ENCODE measurements at regions of chr16 and their contacts with region 1.

Region 1: GRCh38 chr16:85717393-85718121 is 28.8 kb upstream of the GINS2 start:
- DNase-seq: peak; percentile 38
- ATAC-seq: peak; percentile 57
- H3K4me3 Mint-ChIP-seq: no peak overlapping the region
- H3K27ac Mint-ChIP-seq: no peak overlapping the region
- H3K4me1 Mint-ChIP-seq: peaks cover 18% of the 10 kb centered on the region
- H3K27me3 Mint-ChIP-seq: no peaks in the 10 kb centered on the region
- CTCF ChIP-seq: no peak

Region 2: DNA sequence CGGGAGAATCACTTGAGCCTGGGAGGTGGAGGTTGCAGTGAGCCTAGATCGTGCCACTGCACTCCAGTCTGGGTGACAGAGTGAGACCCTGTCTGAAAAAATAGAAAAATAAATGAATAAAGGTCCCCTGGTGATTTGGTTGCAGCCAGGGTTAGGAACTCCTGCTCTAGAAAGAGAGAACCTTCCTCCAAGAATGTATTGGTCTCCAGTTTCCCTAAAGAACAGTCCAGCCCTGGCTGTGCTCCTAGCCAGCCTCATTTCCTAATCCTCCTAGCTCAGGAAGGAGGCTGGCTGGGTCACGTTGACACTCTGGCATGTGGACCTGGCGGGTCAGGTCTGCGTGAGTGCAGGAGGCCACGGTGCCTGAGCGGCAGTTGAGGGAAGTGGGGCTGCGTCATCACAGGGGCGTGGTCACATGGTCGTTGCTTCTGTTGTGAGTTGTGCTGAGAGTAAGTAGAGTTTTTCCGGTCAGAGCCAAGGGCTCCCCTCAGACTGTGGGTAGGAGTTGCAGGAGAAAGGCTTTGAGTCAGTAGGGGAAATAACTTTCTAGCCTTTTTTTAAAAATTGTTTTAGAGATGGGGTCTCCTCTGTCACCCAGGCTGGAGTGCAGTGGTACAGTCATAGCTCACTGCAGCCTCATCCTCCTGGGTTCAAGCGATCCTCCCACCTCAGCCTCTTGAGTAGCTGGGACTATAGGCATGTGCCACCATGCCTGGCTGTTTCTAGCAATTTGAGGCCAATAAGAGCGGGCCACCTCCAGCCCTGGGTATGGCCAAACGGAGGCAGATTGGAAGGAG is 411.4 kb before region 1 on chr16:
- CTCF ChIA-PET with region 1: no interaction called
- POLR2A ChIA-PET with region 1: no interaction called
- intact Hi-C with region 1: loop called (anchors 2 kb)
- DNase-seq: peak; percentile 72
- ATAC-seq: peak; percentile 69
- H3K4me3 Mint-ChIP-seq: peak overlapping the region; percentile 29
- H3K27ac Mint-ChIP-seq: peak overlapping the region; percentile 71
- H3K4me1 Mint-ChIP-seq: peaks cover 64% of the 10 kb centered on the region
- H3K27me3 Mint-ChIP-seq: peaks cover 2% of the 10 kb centered on the region
- CTCF ChIP-seq: no peak

Region 3: GRCh38 chr16:85420501-85421337 is 296.8 kb before region 1 on chr16:
- CTCF ChIA-PET with region 1: interaction called, 3 read pairs
- POLR2A ChIA-PET with region 1: no interaction called
- intact Hi-C with region 1: loop called (anchors 2 kb)
- DNase-seq: peak; percentile 80
- ATAC-seq: peak; percentile 78
- H3K4me3 Mint-ChIP-seq: no peak overlapping the region
- H3K27ac Mint-ChIP-seq: no peak overlapping the region
- H3K4me1 Mint-ChIP-seq: no peaks in the 10 kb centered on the region
- H3K27me3 Mint-ChIP-seq: peaks cover 14% of the 10 kb centered on the region
- CTCF ChIP-seq: peak; percentile 99

Region 4: GRCh38 chr16:85448557-85449197 is 268.9 kb before region 1 on chr16:
- CTCF ChIA-PET with region 1: no interaction called
- POLR2A ChIA-PET with region 1: no interaction called
- intact Hi-C with region 1: no loop called
- DNase-seq: peak; percentile 27
- ATAC-seq: no peak
- H3K4me3 Mint-ChIP-seq: peak overlapping the region; percentile 48
- H3K27ac Mint-ChIP-seq: no peak overlapping the region
- H3K4me1 Mint-ChIP-seq: peaks cover 25% of the 10 kb centered on the region
- H3K27me3 Mint-ChIP-seq: peaks cover 11% of the 10 kb centered on the region
- CTCF ChIP-seq: no peak

Region 5: DNA sequence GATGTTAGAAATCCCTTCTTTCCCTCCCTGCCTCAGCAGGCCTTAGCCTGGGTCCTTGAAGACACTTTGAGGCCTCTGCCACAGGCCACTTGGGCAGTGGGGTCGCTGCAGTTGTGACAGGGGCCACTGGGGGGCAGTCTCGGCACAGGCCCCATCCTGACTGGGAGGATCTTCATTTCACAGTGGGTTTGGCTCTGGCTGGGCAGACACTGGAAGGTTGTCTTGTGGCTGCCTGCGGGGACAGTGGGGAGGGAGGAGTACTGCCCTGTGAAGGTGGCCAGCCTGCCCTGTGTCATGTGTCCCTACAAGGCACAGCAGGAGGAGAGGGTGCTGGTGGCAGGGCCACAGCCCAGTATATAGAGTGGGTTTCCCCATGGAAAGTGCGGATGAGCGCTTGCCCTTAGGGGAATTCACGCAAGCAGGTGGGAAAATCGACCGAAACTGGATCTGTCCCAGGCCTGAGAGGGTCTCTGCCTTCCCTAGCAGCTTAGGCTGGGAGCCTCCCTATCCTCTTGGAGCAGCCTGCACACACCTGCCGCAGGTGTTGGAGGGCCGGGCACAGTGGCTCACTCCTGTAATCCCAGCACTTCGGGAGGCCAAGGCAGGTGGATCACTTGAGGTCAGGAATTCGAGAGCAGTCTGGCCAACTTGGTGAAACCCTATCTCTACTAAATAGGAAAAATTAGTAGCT is 57.6 kb before region 1 on chr16:
- CTCF ChIA-PET with region 1: interaction called, 12 read pairs
- POLR2A ChIA-PET with region 1: no interaction called
- intact Hi-C with region 1: loop called (anchors 1 kb)
- DNase-seq: peak; percentile 70
- ATAC-seq: peak; percentile 97
- H3K4me3 Mint-ChIP-seq: no peak overlapping the region
- H3K27ac Mint-ChIP-seq: peak overlapping the region; percentile 67
- H3K4me1 Mint-ChIP-seq: no peaks in the 10 kb centered on the region
- H3K27me3 Mint-ChIP-seq: no peaks in the 10 kb centered on the region
- CTCF ChIP-seq: no peak

Region 6: GRCh38 chr16:85688586-85689284 is 28.8 kb before region 1 on chr16 and contains the start of gene GINS2:
- CTCF ChIA-PET with region 1: interaction called, 4 read pairs
- POLR2A ChIA-PET with region 1: no interaction called
- intact Hi-C with region 1: loop called (anchors 1 kb)
- DNase-seq: peak; percentile 78
- ATAC-seq: peak; percentile 100
- H3K4me3 Mint-ChIP-seq: peak within 1 kb of the TSS; percentile 78
- H3K27ac Mint-ChIP-seq: no peak within 1 kb of the TSS
- H3K4me1 Mint-ChIP-seq: peaks cover 24% of the 10 kb centered on the region
- H3K27me3 Mint-ChIP-seq: no peaks in the 10 kb centered on the region
- CTCF ChIP-seq: no peak
- total RNA-seq, gene GINS2: 6.0 and 6.8 TPM in 2 replicates